ENCODE measurements at regions of chr5 and their contacts with region 1.

Region 1: GRCh38 chr5:57298295-57298984 is 124.6 kb downstream of the GPBP1 start:
- DNase-seq: peak; percentile 85

Region 2: GRCh38 chr5:57676222-57677098 is 378.0 kb after region 1 on chr5:
- intact Hi-C with region 1: no loop called
- DNase-seq: no peak

Region 3: DNA sequence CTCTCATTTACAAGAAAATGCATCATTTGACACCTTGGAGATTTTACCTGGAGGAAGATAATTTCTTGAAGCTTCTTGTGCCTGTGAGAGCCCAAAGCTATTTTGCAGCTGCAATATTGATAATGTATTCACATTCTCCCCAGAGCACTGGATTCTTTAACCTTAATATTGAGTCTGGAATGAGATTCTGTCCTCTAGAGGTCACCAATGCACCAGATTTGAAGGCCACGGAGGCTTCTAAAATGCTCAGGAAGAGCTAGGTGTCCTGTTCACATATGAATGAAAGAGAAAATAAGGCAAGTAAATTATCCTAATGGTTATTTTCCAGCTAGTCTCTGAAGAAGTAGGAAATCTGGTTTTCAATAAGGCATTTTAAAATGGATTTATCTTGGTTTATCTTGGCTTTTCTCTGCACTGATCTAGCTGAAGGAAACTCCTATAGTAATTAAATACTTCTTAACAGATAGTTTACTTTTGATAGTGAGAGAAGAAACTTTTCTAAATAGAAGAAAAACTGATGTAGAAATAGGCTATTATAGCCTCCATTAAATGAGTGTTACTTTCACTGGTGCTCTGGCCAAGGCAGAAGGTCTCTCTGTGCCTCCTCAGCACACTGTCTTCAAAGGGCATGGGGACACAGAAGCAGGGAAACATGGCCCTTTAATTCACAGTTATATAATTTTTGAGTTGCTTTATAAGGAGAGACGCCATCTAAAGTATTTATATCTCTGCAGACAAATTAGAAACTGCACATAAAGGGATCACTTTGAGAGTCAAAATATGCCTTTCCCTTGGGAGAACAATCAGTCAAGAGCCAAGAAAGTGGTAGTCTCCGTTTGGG is 481.2 kb after region 1 on chr5:
- intact Hi-C with region 1: loop called in 1 of 2 experiments (anchors 10 kb)
- DNase-seq: no peak

Measured in posterior vena cava (tissue), 2 donors.